Sigmoid colon (tissue), 7 donors: ENCODE measurements at regions of chr2 and their contacts with region 1.

Region 1: GRCh38 chr2:98412751-98413458 is 31.8 kb upstream of the INPP4A start:
- DNase-seq: no peak
- H3K4me3 ChIP-seq: no peak overlapping the region
- H3K27ac ChIP-seq: no peak overlapping the region
- H3K4me1 ChIP-seq: peaks cover 0 to 4% (median 0%) of the 10 kb centered on the region in 4 donors
- H3K27me3 ChIP-seq: no peaks in the 10 kb centered on the region
- CTCF ChIP-seq: peak in 3 of 4 experiments; percentile 45 to 70 (median 66)
- EP300 ChIP-seq: no peak
- POLR2A ChIP-seq: no peak

Region 2: GRCh38 chr2:98518090-98518489 is 105.2 kb after region 1 on chr2:
- intact Hi-C with region 1: loop called (anchors 5 kb)
- DNase-seq: peak; percentile 68
- H3K4me3 ChIP-seq: no peak overlapping the region
- H3K27ac ChIP-seq: peak overlapping the region in 1 of 4 donors; percentile 64
- H3K4me1 ChIP-seq: peaks cover 0 to 58% (median 38%) of the 10 kb centered on the region in 4 donors
- H3K27me3 ChIP-seq: no peaks in the 10 kb centered on the region
- CTCF ChIP-seq: peak; percentile 22 to 40 (median 29)
- EP300 ChIP-seq: no peak
- POLR2A ChIP-seq: no peak

Region 3: DNA sequence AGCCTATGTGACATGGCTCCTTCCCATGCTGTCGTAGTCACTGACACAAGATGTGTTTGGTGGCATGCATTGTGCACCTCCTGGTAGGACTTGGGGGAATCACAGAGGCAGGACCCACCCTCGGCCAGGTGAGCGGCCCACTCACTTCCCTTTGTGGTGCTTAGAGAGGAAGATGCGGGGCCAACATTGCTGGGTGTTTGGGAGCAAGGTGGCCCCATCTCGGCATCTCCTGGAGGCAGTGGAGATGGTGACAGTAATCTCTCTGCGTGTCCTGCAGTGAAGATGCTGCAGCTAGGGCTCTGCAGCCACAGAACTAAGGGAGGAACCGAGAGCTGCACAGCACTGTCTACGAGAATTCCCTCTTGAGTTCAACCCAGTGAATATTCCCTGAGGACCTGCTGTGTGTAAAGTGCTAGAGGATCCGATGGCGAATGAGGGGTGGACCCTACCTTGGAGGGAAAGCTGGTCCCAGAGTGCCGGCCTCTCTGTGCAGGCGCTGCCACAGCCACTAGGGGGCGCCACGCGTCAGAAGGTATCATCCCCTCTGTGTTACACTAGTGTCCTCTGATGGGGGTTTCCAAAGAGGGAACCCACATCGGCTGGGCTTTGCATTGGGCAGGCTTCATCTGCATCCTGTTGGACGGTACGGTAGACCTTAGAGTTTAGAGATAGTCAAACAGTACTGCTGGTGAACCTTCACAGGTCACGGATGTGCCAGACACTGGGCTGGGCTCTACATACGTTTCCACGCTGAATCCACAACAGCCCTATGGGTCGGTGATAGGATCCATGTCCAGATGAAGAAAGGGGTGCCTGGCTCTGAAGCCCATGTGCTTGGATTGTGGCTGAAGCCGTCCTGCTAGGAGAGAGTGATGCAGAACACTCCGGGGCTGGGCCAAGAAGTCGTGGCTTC is 156.2 kb after region 1 on chr2:
- intact Hi-C with region 1: loop called (anchors 5 kb)
- DNase-seq: peak; percentile 34
- H3K4me3 ChIP-seq: no peak overlapping the region
- H3K27ac ChIP-seq: no peak overlapping the region
- H3K4me1 ChIP-seq: no peaks in the 10 kb centered on the region
- H3K27me3 ChIP-seq: no peaks in the 10 kb centered on the region
- CTCF ChIP-seq: peak; percentile 16 to 78 (median 69)
- EP300 ChIP-seq: no peak
- POLR2A ChIP-seq: no peak

Region 4: DNA sequence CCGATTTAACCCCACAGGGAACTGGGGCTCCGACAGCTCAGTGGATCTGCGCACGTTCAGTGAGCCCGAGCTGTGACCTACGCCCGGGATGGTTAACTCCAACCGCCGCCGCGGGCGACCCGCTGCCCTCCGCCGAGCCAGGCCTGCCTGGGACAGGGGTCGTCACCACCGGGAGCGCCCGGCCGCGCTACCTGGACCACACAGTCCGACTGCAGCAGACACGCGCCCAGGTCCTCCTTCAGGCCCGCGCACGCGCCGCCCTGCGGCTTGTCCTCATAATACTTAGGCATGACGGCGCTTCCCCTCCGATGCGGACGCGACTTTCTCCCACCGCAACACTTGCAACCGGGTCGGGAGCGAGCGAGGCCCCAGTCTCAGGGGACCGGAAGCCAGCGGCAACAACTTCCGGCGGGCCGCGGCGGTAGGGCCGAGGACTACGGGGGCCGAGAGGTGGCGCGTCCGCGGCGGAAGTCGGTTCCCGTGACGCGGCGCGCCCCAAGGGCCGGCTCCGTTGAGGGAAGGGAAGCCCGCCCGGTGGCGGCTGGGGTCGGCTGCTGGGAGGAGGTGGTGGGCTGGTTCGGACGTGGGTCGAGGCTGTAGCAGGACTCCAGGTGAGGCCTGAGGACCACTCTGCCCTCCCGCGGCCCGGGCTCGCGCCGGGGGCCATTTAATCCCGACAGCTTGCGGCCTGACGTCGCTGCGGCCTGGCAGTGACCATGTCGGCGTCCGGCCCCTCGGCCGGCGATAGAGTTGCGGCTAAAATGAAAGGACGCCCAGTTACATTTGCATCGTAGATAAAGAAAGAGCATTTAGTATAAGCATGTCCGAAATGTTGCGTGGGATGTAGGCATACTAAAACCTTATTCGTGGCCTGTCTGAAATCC is 195.5 kb after region 1 on chr2 and contains the starts of genes COA5 and UNC50:
- intact Hi-C with region 1: loop called (anchors 2 kb)
- DNase-seq: peak; percentile 94
- H3K4me3 ChIP-seq: peak within 1 kb of the TSS; percentile 56 to 95 (median 93)
- H3K27ac ChIP-seq: peak within 1 kb of the TSS; percentile 93 to 97 (median 94)
- H3K4me1 ChIP-seq: peaks cover 0 to 60% (median 48%) of the 10 kb centered on the region in 4 donors
- H3K27me3 ChIP-seq: no peaks in the 10 kb centered on the region
- CTCF ChIP-seq: no peak
- EP300 ChIP-seq: peak in 1 of 4 donors; percentile 36
- POLR2A ChIP-seq: peak; percentile 71 to 83
- total RNA-seq, gene COA5: 35.5 to 53.8 (median 43.4) TPM
- total RNA-seq, gene UNC50: 39.4 to 61.0 (median 52.7) TPM

Region 5: GRCh38 chr2:98835831-98836385 is 423.0 kb after region 1 on chr2:
- intact Hi-C with region 1: loop called (anchors 10 kb)
- DNase-seq: no peak
- H3K4me3 ChIP-seq: no peak overlapping the region
- H3K27ac ChIP-seq: no peak overlapping the region
- H3K4me1 ChIP-seq: no peaks in the 10 kb centered on the region
- H3K27me3 ChIP-seq: no peaks in the 10 kb centered on the region
- CTCF ChIP-seq: no peak
- EP300 ChIP-seq: no peak
- POLR2A ChIP-seq: no peak